Aorta (tissue), 5 donors: ENCODE measurements at regions of chrX and their contacts with region 1.

Region 1: DNA sequence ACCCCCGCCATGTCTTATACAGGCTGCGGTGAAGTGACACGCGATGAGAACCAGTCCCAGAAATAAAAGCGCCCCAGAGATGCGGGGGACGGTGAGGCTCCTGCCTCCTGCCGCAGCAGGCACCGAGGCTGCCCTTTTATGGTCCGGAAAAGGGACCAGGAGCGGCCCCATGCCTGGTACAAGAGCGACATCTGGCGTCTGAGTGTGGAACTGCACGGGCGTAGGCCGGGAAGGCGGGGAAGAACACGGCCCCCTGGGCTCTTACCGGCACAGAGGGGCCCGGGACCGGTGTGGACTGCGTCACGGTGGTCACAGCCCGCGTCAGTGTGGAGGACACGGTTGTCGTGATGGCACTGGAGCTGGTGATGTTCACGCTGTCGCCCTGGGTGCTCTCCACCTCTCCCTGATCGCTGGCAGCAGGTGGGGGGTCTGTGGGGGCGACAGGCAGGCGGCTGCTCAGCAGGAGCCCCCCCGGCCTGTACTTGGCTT is 8.9 kb upstream of the RENBP start:
- DNase-seq: peak; percentile 84 to 93
- ATAC-seq: peak; percentile 89
- H3K4me3 ChIP-seq: no peak overlapping the region
- H3K27ac ChIP-seq: peak overlapping the region in 1 of 2 donors; percentile 19
- H3K4me1 ChIP-seq: no peaks in the 10 kb centered on the region
- H3K27me3 ChIP-seq: no peaks in the 10 kb centered on the region

Region 2: DNA sequence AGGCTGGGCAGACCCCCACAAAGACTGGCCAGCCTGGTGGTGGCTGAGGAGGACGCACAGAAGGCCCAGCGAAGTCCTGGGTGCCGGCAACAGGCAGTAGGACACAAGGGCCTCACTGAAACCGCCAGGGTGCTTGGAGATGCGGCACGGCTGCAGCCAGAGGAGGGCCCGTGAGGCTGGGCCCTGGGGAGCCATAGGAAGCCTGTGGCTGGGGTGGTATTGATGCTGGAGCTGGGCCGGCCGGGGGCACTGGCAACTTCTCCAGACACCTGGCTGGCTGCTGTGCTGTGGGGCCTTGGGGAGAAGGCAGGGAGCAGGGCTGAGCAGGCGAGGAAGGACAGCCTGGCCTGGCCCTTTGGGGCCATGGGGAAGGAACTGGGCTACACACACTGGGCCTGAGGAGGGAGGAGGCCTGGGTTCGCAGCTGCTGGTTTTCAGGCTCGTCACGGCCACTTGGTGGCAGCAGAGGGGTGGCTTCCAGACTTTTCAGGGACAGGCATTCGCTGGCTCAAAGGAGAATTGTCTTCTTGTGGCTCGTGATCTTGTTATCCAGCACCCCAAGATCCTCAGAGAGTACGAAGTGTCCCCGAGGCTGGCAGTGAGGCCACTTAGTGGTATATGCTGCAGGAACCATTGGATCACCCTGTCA is 398.7 kb before region 1 on chrX:
- intact Hi-C with region 1: loop called in 1 of 2 experiments (anchors 5 kb)
- DNase-seq: peak; percentile 82 to 87
- ATAC-seq: peak; percentile 53
- H3K4me3 ChIP-seq: no peak overlapping the region
- H3K27ac ChIP-seq: no peak overlapping the region
- H3K4me1 ChIP-seq: no peaks in the 10 kb centered on the region
- H3K27me3 ChIP-seq: no peaks in the 10 kb centered on the region

Region 3: GRCh38 chrX:153763989-153764755 is 189.2 kb before region 1 on chrX and contains the start of gene PLXNB3:
- intact Hi-C with region 1: loop called (anchors 2 to 5 kb)
- DNase-seq: peak; percentile 89 to 93
- ATAC-seq: peak; percentile 77
- H3K4me3 ChIP-seq: no peak within 1 kb of the TSS
- H3K27ac ChIP-seq: no peak within 1 kb of the TSS
- H3K4me1 ChIP-seq: no peaks in the 10 kb centered on the region
- H3K27me3 ChIP-seq: no peaks in the 10 kb centered on the region
- total RNA-seq, gene PLXNB3: 18.0 to 18.7 TPM